ENCODE measurements at regions of chr6 and their contacts with region 1.

Region 1: DNA sequence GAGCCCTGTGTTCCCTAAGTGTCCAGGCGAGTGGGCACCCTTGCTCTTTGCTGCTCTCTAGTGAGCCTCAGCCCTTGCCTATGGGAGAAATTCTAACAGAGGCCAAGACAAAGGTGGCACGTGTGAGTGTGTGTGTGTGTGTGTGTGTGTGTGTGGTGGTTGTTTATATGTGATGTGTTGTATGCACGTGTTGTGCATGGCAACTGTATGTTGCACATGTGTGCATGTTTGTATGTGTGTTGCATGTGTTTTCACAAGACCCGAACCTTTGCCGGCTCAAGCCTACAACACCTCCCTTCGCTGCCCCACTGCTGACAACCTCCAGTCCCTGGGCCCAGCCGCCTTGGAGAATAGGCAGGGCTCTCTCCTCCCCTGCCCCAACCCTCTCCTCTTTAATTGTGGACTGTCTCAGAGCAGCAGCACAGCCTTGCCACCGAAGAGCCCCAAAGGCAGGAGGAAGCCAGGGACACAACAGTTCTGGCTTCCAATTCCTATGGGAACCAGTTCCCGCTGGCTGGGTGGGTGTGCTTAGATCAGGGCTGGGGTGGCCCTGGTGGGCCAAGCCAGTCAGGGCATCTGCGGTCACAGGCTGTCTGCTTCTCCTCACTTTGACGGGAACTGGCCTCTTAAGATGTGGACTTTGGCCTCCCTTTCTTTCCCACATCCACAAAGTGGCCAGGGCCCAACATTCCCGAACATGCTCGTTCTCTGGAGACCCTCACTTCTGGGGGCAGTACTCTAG is 2.7 kb downstream of the KCNK16 start:
- DNase-seq: no peak
- H3K4me3 ChIP-seq: no peak overlapping the region
- H3K27ac ChIP-seq: no peak overlapping the region
- H3K4me1 ChIP-seq: no peaks in the 10 kb centered on the region
- H3K27me3 ChIP-seq: no peaks in the 10 kb centered on the region
- CTCF ChIP-seq: no peak

Region 2: DNA sequence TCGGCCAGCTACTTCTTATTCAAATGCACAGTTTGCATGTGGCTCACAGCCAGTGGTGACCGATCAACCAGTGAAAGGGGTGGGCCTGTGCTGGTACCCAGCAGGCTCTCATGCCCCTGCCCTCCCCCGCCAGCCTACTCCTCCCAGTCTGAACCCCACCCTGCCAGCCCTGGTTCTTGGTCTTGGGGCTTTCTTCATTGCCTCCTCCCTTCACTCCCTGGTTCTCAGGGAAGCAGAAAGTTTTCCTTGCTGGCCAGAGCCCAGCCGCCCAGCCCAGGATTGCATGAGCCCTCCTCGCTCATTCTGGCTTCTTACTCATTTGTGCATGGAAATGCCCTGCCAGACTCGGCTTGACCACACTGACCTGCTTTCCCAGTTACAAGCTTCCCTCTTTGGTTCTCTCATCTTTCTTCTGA is 46.4 kb before region 1 on chr6:
- CTCF ChIA-PET with region 1: no interaction called
- dilution Hi-C with region 1: loop called (anchors 5 kb)
- in situ Hi-C with region 1: no loop called
- intact Hi-C with region 1: no loop called
- DNase-seq: no peak
- H3K4me3 ChIP-seq: no peak overlapping the region
- H3K27ac ChIP-seq: no peak overlapping the region
- H3K4me1 ChIP-seq: no peaks in the 10 kb centered on the region
- H3K27me3 ChIP-seq: peaks cover 6% of the 10 kb centered on the region
- CTCF ChIP-seq: no peak

Measured in mammary epithelial cell (primary cell).